MCF 10A (cell line): ENCODE measurements at regions of chr1 and their contacts with region 1.

Region 1: GRCh38 chr1:206725109-206725963 is 40.6 kb downstream of the MAPKAPK2 start:
- DNase-seq: peak; percentile 78
- H3K4me3 Mint-ChIP-seq: no peak overlapping the region
- H3K27ac Mint-ChIP-seq: no peak overlapping the region
- H3K4me1 Mint-ChIP-seq: peaks cover 57% of the 10 kb centered on the region
- H3K27me3 Mint-ChIP-seq: no peaks in the 10 kb centered on the region
- CTCF ChIP-seq: peak; percentile 54

Region 2: DNA sequence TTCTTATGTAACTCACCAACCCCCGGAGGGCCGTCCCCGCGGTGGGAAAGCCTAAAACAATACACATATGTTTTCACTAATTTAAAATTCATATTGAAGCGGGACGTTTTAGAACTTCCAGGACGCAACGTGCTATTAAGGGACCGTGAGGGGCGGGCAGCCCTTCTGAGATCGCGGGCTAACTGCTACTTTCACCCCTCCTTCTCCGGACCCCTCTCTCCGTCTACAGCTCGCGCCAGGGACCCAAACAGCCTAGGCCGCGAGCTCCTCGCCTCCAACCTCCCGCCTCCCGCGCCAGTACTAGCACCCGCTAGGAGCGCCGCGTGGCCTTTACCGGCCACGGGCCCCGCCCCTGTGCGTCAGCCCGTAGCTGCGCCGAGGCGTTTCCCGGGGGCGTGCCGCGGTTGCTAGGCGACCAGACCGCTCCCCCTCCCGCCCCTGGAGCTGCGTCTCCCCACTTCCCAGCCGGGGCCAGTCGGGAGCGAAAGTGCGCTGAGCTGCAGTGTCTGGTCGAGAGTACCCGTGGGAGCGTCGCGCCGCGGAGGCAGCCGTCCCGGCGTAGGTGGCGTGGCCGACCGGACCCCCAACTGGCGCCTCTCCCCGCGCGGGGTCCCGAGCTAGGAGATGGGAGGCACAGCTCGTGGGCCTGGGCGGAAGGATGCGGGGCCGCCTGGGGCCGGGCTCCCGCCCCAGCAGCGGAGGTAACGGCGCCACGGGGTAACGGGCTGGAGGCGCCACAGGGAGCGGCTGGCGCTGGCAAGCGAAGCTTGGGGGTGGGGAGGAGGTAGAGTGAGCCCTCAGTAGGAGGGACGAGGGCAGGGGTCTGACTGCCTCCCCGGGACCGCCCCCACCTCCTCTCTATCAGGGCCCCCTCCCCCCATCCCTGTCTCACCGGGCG is 90.0 kb before region 1 on chr1 and contains the start of gene DYRK3:
- CTCF ChIA-PET with region 1: interaction called, 55 read pairs
- POLR2A ChIA-PET with region 1: interaction called, 6 read pairs
- intact Hi-C with region 1: loop called (anchors 2 kb)
- DNase-seq: peak; percentile 99
- H3K4me3 Mint-ChIP-seq: peak within 1 kb of the TSS; percentile 89
- H3K27ac Mint-ChIP-seq: peak within 1 kb of the TSS; percentile 82
- H3K4me1 Mint-ChIP-seq: peaks cover 38% of the 10 kb centered on the region
- H3K27me3 Mint-ChIP-seq: no peaks in the 10 kb centered on the region
- CTCF ChIP-seq: no peak
- total RNA-seq, gene DYRK3: 45.4 and 58.5 TPM in 2 replicates

Region 3: GRCh38 chr1:206684478-206685333 is 40.6 kb before region 1 on chr1 and contains the start of gene MAPKAPK2:
- CTCF ChIA-PET with region 1: interaction called, 79 read pairs
- POLR2A ChIA-PET with region 1: interaction called, 20 read pairs
- intact Hi-C with region 1: loop called (anchors 2 kb)
- DNase-seq: peak; percentile 83
- H3K4me3 Mint-ChIP-seq: peak within 1 kb of the TSS; percentile 93
- H3K27ac Mint-ChIP-seq: peak within 1 kb of the TSS; percentile 97
- H3K4me1 Mint-ChIP-seq: peaks cover 46% of the 10 kb centered on the region
- H3K27me3 Mint-ChIP-seq: no peaks in the 10 kb centered on the region
- CTCF ChIP-seq: no peak
- total RNA-seq, gene MAPKAPK2: 142 and 178 TPM in 2 replicates

Region 4: DNA sequence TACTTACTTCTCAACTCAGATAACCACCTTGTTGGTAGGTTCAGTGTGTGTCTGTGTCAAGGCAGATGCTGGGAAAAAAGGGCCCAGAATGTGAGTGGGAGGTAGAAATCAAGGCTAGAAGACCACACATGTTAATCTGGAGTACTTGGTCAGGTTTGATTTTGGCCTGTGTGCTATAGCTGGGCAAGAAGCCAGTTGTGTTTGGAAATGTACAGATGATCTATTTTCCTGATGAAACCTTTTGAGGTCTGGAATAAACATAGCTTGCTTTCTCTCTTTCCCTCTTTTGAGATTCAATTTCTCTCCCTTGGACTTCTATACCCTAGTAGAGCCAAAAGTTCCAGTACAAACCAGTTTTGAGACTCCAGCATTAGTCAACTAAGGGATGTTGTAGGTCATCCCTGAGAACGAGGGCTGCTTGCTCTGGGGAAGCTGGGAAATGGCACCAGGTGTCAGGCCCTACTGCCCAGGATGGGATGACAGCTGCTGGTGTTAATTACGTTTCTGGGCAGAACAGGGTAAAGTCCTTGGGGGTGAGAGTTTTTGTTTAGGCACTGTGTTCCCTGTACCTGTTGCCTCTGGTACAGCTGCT is 24.8 kb before region 1 on chr1:
- CTCF ChIA-PET with region 1: interaction called, 15 read pairs
- POLR2A ChIA-PET with region 1: interaction called, 4 read pairs
- intact Hi-C with region 1: no loop called
- DNase-seq: peak; percentile 81
- H3K4me3 Mint-ChIP-seq: no peak overlapping the region
- H3K27ac Mint-ChIP-seq: peak overlapping the region; percentile 80
- H3K4me1 Mint-ChIP-seq: peaks cover 57% of the 10 kb centered on the region
- H3K27me3 Mint-ChIP-seq: no peaks in the 10 kb centered on the region
- CTCF ChIP-seq: no peak

Region 5: DNA sequence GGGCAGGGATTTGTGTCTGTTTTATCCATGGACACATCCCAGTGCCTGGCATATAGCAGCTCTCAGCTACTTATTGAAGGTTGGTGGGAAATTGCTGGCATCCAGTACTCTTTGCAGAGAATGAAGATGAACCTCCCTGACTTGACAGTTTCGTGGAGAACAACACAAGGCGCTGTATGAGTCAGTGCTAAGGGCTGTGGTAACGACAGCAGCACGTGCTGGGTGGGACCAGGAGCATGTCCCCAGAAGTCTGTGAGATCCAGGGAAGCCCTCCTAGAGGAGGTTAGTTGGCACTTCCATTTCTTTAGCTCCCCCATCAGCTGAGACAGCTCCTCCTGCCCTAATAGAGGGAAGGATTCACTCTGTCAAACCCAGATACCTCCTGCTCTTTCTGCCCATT is 19.3 kb after region 1 on chr1:
- CTCF ChIA-PET with region 1: interaction called, 39 read pairs
- POLR2A ChIA-PET with region 1: interaction called, 4 read pairs
- intact Hi-C with region 1: no loop called
- DNase-seq: no peak
- H3K4me3 Mint-ChIP-seq: no peak overlapping the region
- H3K27ac Mint-ChIP-seq: no peak overlapping the region
- H3K4me1 Mint-ChIP-seq: peaks cover 5% of the 10 kb centered on the region
- H3K27me3 Mint-ChIP-seq: peaks cover 8% of the 10 kb centered on the region
- CTCF ChIP-seq: no peak

Region 6: GRCh38 chr1:206803221-206803730 is 77.9 kb after region 1 on chr1:
- CTCF ChIA-PET with region 1: interaction called, 37 read pairs
- POLR2A ChIA-PET with region 1: no interaction called
- intact Hi-C with region 1: no loop called
- DNase-seq: no peak
- H3K4me3 Mint-ChIP-seq: no peak overlapping the region
- H3K27ac Mint-ChIP-seq: no peak overlapping the region
- H3K4me1 Mint-ChIP-seq: peaks cover 5% of the 10 kb centered on the region
- H3K27me3 Mint-ChIP-seq: peaks cover 34% of the 10 kb centered on the region
- CTCF ChIP-seq: no peak

Region 7: DNA sequence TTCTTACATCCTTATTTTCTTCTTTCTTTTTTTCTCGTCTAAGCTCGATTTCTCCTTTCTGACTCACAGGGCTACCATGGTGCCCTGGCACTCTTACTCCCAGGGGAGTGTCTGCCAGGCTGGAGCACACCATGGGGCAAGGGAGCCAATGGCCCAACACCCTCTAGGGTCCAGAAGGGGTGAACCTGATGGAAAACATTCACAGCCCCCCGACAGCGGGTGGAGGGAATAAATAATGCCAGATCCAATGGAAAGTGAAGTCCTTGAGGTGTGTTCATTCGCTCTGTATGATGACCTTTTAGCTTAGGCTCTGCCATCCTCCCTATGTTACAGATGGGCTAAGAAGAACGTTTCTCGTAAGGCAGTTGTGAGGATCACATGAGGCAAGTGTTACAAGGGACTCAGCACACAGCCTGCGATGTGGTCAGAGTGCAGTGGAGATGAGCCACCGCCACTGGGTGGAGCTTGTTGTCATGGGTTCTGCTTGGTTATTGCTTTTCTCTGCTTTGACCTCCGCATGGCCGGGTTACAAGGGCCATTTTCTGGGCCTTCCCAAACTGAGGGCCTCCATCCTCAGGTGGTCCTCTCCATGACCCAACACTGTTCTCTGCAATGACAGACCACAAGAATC is 199.9 kb after region 1 on chr1:
- CTCF ChIA-PET with region 1: interaction called, 297 read pairs
- POLR2A ChIA-PET with region 1: no interaction called
- intact Hi-C with region 1: no loop called
- DNase-seq: no peak
- H3K4me3 Mint-ChIP-seq: no peak overlapping the region
- H3K27ac Mint-ChIP-seq: no peak overlapping the region
- H3K4me1 Mint-ChIP-seq: no peaks in the 10 kb centered on the region
- H3K27me3 Mint-ChIP-seq: no peaks in the 10 kb centered on the region
- CTCF ChIP-seq: no peak